Naive thymus-derived CD4-positive, alpha-beta T cell (primary cell): ENCODE measurements at regions of chr11 and their contacts with region 1.

Region 1: DNA sequence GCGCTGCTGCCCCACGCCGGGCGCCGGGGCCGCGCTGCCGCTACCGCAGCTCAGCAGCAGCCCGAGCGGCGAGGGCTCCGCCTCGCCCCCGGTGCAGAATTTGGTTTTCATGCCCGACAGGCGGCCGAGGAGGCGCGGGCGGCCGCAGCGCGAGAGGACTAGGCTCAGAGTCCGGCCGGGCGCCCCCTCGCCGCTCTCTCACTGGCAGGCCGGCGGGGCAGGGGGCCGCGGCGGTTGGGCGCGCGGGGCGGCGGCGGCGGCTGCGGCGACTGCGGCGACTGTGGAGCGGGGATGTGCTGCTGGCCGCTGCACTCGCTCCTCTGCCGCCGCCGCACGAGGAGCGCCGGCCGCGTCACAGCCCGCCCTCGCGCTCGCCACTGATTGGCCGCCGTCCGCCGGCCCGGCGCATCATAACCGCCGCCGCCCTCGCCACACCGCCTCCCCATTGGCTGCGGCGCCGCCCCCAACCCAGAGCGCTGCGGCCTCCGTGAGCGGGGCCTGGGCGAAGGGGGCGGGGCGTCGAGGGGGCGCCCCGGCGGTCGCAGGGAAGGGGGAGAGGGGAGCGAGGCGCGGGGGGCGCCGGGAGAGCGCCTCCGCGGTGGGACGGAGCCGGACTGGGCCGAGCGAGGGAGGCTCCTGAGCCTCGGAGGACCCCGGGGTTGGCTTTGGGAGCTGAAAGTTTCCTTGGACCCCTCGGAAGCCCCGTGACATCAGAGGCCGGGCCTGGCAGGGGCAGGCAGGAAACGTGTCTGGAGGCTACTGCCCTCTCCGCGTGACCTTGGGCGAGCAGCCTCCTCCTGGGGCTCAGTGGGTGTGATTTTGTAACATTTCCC is at the start of gene CHKA:
- DNase-seq: peak; percentile 69 to 95 (median 80)
- ATAC-seq: peak; percentile 91
- H3K4me3 ChIP-seq: peak within 1 kb of the TSS; percentile 79
- H3K4me3 Mint-ChIP-seq: peak within 1 kb of the TSS; percentile 72 to 90 (median 87)
- H3K27ac ChIP-seq: peak within 1 kb of the TSS; percentile 68
- H3K27ac Mint-ChIP-seq: peak within 1 kb of the TSS; percentile 28 to 92 (median 84)
- H3K4me1 ChIP-seq: peaks cover 0 to 11% of the 10 kb centered on the region in 2 donors
- H3K4me1 Mint-ChIP-seq: peaks cover 5 to 19% (median 13%) of the 10 kb centered on the region in 7 donors
- H3K27me3 ChIP-seq: no peaks in the 10 kb centered on the region
- H3K27me3 Mint-ChIP-seq: peaks cover 0 to 21% (median 0%) of the 10 kb centered on the region in 5 donors
- total RNA-seq, gene CHKA: 6.0 to 31.3 (median 7.3) TPM

Region 2: GRCh38 chr11:68003846-68004550 is 117.3 kb before region 1 on chr11 and contains the start of gene UNC93B1:
- CTCF ChIA-PET with region 1: no interaction called
- POLR2A ChIA-PET with region 1: no interaction called
- intact Hi-C with region 1: loop called (anchors 5 kb)
- DNase-seq: peak; percentile 54 to 85 (median 69)
- ATAC-seq: peak; percentile 93
- H3K4me3 ChIP-seq: peak within 1 kb of the TSS; percentile 64
- H3K4me3 Mint-ChIP-seq: peak within 1 kb of the TSS; percentile 82 to 93 (median 86)
- H3K27ac ChIP-seq: peak within 1 kb of the TSS; percentile 66
- H3K27ac Mint-ChIP-seq: peak within 1 kb of the TSS; percentile 74 to 92 (median 85)
- H3K4me1 ChIP-seq: peaks cover 6 to 8% of the 10 kb centered on the region in 2 donors
- H3K4me1 Mint-ChIP-seq: peaks cover 0 to 24% (median 20%) of the 10 kb centered on the region in 7 donors
- H3K27me3 ChIP-seq: no peaks in the 10 kb centered on the region
- H3K27me3 Mint-ChIP-seq: no peaks in the 10 kb centered on the region
- total RNA-seq, gene UNC93B1: 10.1 to 76.3 (median 21.1) TPM

Region 3: GRCh38 chr11:68030318-68031138 is 90.8 kb before region 1 on chr11 and contains the start of gene NDUFS8:
- CTCF ChIA-PET with region 1: interaction called, 4 read pairs
- POLR2A ChIA-PET with region 1: no interaction called
- intact Hi-C with region 1: loop called (anchors 1 kb)
- DNase-seq: peak; percentile 83 to 99 (median 98)
- ATAC-seq: peak; percentile 98
- H3K4me3 ChIP-seq: peak within 1 kb of the TSS; percentile 98
- H3K4me3 Mint-ChIP-seq: peak within 1 kb of the TSS; percentile 90 to 99 (median 96)
- H3K27ac ChIP-seq: peak within 1 kb of the TSS; percentile 97
- H3K27ac Mint-ChIP-seq: peak within 1 kb of the TSS; percentile 73 to 98 (median 92)
- H3K4me1 ChIP-seq: peaks cover 11 to 16% of the 10 kb centered on the region in 2 donors
- H3K4me1 Mint-ChIP-seq: peaks cover 12 to 32% (median 23%) of the 10 kb centered on the region in 7 donors
- H3K27me3 ChIP-seq: no peaks in the 10 kb centered on the region
- H3K27me3 Mint-ChIP-seq: no peaks in the 10 kb centered on the region
- total RNA-seq, gene NDUFS8: 67.1 to 126 (median 80.1) TPM

Region 4: GRCh38 chr11:68038718-68039525 is 82.4 kb before region 1 on chr11 and contains the start of gene TCIRG1:
- CTCF ChIA-PET with region 1: no interaction called
- POLR2A ChIA-PET with region 1: no interaction called
- intact Hi-C with region 1: loop called (anchors 1 to 2 kb)
- DNase-seq: peak in 8 of 9 donors; percentile 28 to 72 (median 41)
- ATAC-seq: peak; percentile 53
- H3K4me3 ChIP-seq: peak within 1 kb of the TSS; percentile 84
- H3K4me3 Mint-ChIP-seq: peak within 1 kb of the TSS; percentile 87 to 94 (median 90)
- H3K27ac ChIP-seq: peak within 1 kb of the TSS; percentile 88
- H3K27ac Mint-ChIP-seq: peak within 1 kb of the TSS; percentile 92 to 98 (median 94)
- H3K4me1 ChIP-seq: peaks cover 8 to 20% of the 10 kb centered on the region in 2 donors
- H3K4me1 Mint-ChIP-seq: peaks cover 14 to 30% (median 25%) of the 10 kb centered on the region in 7 donors
- H3K27me3 ChIP-seq: no peaks in the 10 kb centered on the region
- H3K27me3 Mint-ChIP-seq: no peaks in the 10 kb centered on the region
- total RNA-seq, gene TCIRG1: 164 to 381 (median 194) TPM

Region 5: DNA sequence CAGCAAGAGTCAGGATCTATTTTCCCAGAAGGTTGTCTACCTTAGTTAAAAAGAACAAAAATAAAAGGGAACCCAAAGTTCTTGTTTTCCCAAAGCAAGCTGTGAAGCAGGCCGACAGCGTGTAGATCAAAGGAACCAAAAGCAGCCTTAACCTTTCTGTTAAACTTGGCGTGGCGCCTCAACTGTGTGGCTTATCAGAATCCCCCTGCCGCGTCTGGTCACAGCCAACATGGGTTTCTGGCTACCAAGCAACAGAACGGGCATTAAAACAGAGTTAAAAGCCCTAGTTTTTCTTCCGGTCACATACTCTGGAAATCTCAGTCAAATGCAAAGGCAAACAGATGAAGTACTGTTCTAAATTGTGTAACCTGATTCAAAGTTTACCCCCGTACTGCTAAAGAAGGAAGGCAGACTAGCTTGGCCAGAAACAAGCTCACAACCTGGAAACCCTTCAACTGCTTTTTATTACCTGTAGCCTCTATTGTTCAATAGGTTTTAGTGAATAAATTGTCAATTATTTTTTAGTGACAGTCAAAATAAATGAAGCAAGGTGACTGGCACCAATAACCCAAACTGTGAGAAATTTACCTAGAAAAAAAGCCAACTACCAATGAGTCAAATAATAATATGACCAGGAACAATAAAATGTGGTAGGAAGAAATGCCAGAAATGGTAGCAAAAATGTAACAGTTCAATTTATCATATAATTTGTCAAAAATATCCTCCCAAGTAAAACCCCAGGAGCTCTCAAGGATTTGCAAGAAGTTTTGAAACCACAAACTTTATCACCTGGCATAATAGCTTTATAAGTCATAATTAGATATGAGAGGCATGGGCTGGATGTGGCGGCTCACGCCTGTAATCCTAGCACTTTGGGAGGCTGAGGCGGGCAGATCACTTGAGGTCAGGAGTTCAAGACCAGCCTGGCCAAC is 21.5 kb before region 1 on chr11:
- CTCF ChIA-PET with region 1: no interaction called
- POLR2A ChIA-PET with region 1: no interaction called
- intact Hi-C with region 1: loop called in 1 of 2 experiments (anchors 1 kb)
- DNase-seq: peak in 7 of 9 donors; percentile 26 to 50 (median 41)
- ATAC-seq: peak; percentile 82
- H3K4me3 ChIP-seq: no peak overlapping the region
- H3K4me3 Mint-ChIP-seq: peak overlapping the region; percentile 27 to 84 (median 78)
- H3K27ac ChIP-seq: peak overlapping the region; percentile 49
- H3K27ac Mint-ChIP-seq: peak overlapping the region in 8 of 9 donors; percentile 42 to 87 (median 75)
- H3K4me1 ChIP-seq: peaks cover 0 to 5% of the 10 kb centered on the region in 2 donors
- H3K4me1 Mint-ChIP-seq: peaks cover 9 to 25% (median 22%) of the 10 kb centered on the region in 7 donors
- H3K27me3 ChIP-seq: no peaks in the 10 kb centered on the region
- H3K27me3 Mint-ChIP-seq: no peaks in the 10 kb centered on the region

Region 6: DNA sequence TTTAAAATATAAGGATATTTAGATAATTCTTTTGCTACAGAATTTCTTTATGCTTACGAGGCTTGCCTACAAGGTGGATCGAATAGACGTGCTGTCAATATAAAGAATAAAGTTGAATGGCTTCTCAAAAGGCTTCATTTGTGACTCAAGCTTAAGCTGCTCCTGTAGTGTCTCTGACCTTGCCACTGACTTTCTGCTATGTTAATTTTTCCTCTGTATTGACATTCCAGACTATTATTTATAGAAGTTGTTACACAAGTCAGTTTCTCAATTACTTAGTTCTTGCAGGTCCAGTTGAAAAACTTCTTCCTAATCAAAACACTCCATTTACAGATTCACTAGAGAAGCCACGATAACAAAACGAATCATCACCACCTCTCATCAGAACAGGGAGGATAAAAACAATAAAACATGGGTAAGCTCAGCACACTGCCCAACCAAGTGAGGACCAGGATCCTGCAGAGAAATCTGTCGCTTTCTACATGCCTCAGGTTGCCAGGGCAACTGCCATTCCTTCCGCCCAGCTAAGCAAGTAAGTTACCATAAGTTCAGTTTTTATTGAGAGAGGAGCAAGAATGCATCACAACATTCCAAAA is 38.9 kb after region 1 on chr11:
- CTCF ChIA-PET with region 1: no interaction called
- POLR2A ChIA-PET with region 1: no interaction called
- intact Hi-C with region 1: no loop called
- DNase-seq: no peak
- ATAC-seq: no peak
- H3K4me3 ChIP-seq: no peak overlapping the region
- H3K4me3 Mint-ChIP-seq: no peak overlapping the region
- H3K27ac ChIP-seq: no peak overlapping the region
- H3K27ac Mint-ChIP-seq: peak overlapping the region in 1 of 9 donors; percentile 49
- H3K4me1 ChIP-seq: no peaks in the 10 kb centered on the region
- H3K4me1 Mint-ChIP-seq: peaks cover 0 to 4% (median 0%) of the 10 kb centered on the region in 7 donors
- H3K27me3 ChIP-seq: no peaks in the 10 kb centered on the region
- H3K27me3 Mint-ChIP-seq: no peaks in the 10 kb centered on the region

Region 7: GRCh38 chr11:68213555-68214174 is 92.4 kb after region 1 on chr11:
- CTCF ChIA-PET with region 1: no interaction called
- POLR2A ChIA-PET with region 1: no interaction called
- intact Hi-C with region 1: loop called in 1 of 2 experiments (anchors 2 kb)
- DNase-seq: peak; percentile 69 to 92 (median 86)
- ATAC-seq: peak; percentile 70
- H3K4me3 ChIP-seq: peak overlapping the region; percentile 81
- H3K4me3 Mint-ChIP-seq: peak overlapping the region; percentile 69 to 98 (median 78)
- H3K27ac ChIP-seq: peak overlapping the region; percentile 88
- H3K27ac Mint-ChIP-seq: peak overlapping the region in 7 of 9 donors; percentile 35 to 99 (median 92)
- H3K4me1 ChIP-seq: peaks cover 27% of the 10 kb centered on the region in 2 donors
- H3K4me1 Mint-ChIP-seq: peaks cover 35 to 50% (median 45%) of the 10 kb centered on the region in 7 donors
- H3K27me3 ChIP-seq: no peaks in the 10 kb centered on the region
- H3K27me3 Mint-ChIP-seq: peaks cover 0 to 28% (median 0%) of the 10 kb centered on the region in 5 donors